ENCODE measurements at regions of chrX and their contacts with region 1.

Region 1: GRCh38 chrX:153582896-153583295 is 16.0 kb downstream of the CCNQ start:
- DNase-seq: peak; percentile 50 to 84 (median 67)
- H3K4me3 ChIP-seq: no peak overlapping the region
- H3K4me3 Mint-ChIP-seq: peak overlapping the region; percentile 4 to 78 (median 74)
- H3K27ac ChIP-seq: peak overlapping the region; percentile 35
- H3K27ac Mint-ChIP-seq: peak overlapping the region; percentile 44 to 87 (median 69)
- H3K4me1 ChIP-seq: peaks cover 22% of the 10 kb centered on the region
- H3K4me1 Mint-ChIP-seq: peaks cover 8 to 37% (median 19%) of the 10 kb centered on the region in 4 donors
- H3K27me3 ChIP-seq: no peaks in the 10 kb centered on the region
- H3K27me3 Mint-ChIP-seq: no peaks in the 10 kb centered on the region

Region 2: GRCh38 chrX:153599192-153600031 is 16.5 kb after region 1 on chrX:
- CTCF ChIA-PET with region 1: interaction called, 4 read pairs
- POLR2A ChIA-PET with region 1: interaction called, 11 read pairs
- intact Hi-C with region 1: loop called (anchors 2 kb)
- DNase-seq: peak; percentile 82 to 87 (median 85)
- H3K4me3 ChIP-seq: peak overlapping the region; percentile 42 to 50
- H3K4me3 Mint-ChIP-seq: peak overlapping the region; percentile 88 to 94 (median 90)
- H3K27ac ChIP-seq: peak overlapping the region; percentile 65
- H3K27ac Mint-ChIP-seq: peak overlapping the region in 6 of 7 donors; percentile 29 to 88 (median 78)
- H3K4me1 ChIP-seq: peaks cover 53% of the 10 kb centered on the region
- H3K4me1 Mint-ChIP-seq: peaks cover 21 to 67% (median 41%) of the 10 kb centered on the region in 4 donors
- H3K27me3 ChIP-seq: no peaks in the 10 kb centered on the region
- H3K27me3 Mint-ChIP-seq: no peaks in the 10 kb centered on the region